Esophagus squamous epithelium (tissue), 5 donors: ENCODE measurements at regions of chr6 and their contacts with region 1.

Region 1: DNA sequence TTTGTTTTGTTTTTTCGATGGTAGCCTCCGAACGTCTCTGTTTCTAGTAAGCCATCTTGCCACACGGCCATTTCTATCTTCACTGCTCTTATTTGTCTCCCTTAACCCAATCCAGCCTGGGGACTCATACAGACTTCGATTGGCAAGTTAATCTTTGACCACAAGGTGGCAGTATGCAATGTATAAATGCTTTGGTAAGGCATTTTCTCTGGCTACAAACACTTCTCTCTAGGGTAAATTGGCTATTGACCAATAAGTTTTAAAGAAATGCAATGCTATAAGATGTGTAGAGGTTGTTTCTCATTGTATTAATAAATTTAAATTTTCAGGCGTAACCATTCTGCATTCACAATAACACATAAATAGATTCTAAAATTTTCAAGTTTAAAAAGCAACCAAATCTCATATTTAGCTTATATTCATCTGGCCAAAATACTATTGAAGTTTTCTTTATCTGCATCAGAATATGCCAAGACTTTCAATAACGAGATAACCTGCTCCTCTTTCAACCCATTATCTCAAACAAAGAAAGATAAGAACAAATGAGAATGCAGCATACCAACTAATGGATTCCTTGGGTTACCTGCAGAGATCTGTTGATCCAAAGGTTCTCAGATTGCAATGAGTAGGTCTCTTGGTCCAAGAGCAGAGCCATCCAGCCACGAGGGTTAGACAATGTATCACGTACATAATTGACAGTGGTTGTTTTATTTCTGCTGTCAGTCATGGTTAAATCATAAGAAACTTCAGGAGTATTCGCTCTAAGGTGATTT is 231.9 kb downstream of the PKHD1 start:
- DNase-seq: no peak
- H3K4me3 ChIP-seq: no peak overlapping the region
- H3K27ac ChIP-seq: no peak overlapping the region
- H3K4me1 ChIP-seq: no peaks in the 10 kb centered on the region
- H3K27me3 ChIP-seq: no peaks in the 10 kb centered on the region
- CTCF ChIP-seq: peak; percentile 17 to 63 (median 58)
- POLR2A ChIP-seq: no peak

Region 2: DNA sequence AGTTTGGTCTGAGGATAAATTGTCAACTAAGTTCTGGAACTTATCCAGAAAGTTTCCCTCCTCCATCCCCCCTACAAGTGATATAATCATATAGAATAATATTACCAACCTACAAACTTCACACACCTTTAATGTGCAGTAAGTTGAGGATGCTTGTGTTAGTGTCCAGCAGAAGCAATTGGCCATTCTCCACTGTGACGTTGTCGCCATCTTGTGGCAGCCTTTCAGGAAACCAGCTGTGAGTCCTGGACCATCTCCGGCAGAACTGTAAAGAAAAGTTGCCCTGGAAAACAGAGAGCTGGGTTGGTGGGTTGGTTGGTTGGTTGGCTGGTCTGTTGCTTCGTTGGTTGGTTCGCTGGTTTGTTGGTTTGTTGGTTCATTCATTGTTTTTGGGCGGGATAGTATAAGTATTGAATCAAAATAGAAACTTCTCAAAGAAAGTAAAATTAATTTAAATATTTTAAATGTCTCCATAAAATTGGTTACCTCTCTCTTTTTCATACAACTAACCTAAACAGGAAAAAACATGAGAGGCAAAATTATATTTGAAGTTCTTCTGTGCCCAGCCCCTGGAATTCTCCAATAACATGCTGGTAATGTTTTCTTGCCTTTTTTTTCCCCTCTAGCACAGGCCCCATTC is 104.4 kb after region 1 on chr6:
- intact Hi-C with region 1: loop called (anchors 10 kb)
- DNase-seq: no peak
- H3K4me3 ChIP-seq: no peak overlapping the region
- H3K27ac ChIP-seq: no peak overlapping the region
- H3K4me1 ChIP-seq: no peaks in the 10 kb centered on the region
- H3K27me3 ChIP-seq: no peaks in the 10 kb centered on the region
- CTCF ChIP-seq: peak in 5 of 6 experiments; percentile 56 to 77 (median 69)
- POLR2A ChIP-seq: no peak

Region 3: GRCh38 chr6:51992876-51993275 is 137.4 kb after region 1 on chr6:
- intact Hi-C with region 1: no loop called
- DNase-seq: no peak
- H3K4me3 ChIP-seq: no peak overlapping the region
- H3K27ac ChIP-seq: no peak overlapping the region
- H3K4me1 ChIP-seq: no peaks in the 10 kb centered on the region
- H3K27me3 ChIP-seq: no peaks in the 10 kb centered on the region
- CTCF ChIP-seq: no peak
- POLR2A ChIP-seq: no peak

Region 4: DNA sequence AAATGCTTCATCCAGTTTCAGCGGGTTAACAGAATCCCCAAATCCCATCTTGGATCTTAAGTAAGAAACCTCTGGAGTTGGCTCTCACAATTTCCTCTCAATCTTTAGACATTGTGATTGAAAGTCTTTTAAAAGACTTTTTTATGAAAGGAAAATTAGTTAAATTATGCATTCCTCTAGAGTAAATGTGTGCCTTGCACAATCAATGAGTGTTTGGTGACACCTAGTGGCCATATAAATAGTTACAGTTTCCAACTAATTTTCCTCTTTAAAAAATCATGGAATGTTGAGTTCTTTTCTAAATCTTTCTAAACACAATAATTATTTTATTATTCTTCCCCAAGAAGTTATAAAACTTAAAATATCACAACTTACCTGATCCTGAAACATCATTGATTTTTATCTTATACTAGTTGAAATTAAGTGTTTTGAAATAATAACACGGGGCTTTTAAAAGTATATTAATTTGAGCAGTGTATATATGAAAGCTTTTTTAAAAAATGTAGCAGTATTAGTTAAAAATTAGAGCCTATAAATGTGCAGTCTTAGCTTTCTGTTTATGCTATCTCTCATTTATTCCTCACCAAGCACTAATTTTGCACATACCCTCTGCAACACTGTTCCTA is 165.6 kb after region 1 on chr6:
- intact Hi-C with region 1: loop called (anchors 10 kb)
- DNase-seq: no peak
- H3K4me3 ChIP-seq: no peak overlapping the region
- H3K27ac ChIP-seq: no peak overlapping the region
- H3K4me1 ChIP-seq: no peaks in the 10 kb centered on the region
- H3K27me3 ChIP-seq: peaks cover 0 to 5% (median 0%) of the 10 kb centered on the region in 4 donors
- CTCF ChIP-seq: peak; percentile 45 to 80 (median 71)
- POLR2A ChIP-seq: no peak